ENCODE measurements at regions of chr2 and their contacts with region 1.

Region 1: DNA sequence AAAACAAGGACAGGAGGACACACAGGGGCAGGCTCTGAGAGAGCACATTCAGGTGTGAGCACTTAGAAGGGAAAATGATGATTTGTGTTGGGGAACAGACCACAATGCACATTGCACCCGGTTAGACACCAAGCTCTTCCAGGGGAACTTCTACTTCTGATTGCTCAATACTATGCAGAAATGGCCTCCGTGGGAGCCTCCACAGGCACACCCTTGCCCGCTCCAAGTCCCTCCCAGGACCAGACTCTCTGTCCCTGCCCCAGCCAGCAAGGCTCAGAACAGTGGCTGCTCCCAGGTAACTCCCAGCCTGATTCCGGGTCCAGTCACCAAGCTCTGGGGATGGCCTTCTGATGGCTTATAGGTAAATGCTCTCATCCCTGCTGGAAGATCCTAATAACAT is 56.1 kb downstream of the BCL2L11 start:
- DNase-seq: no peak
- ATAC-seq: no peak; the same call in 1 of the 2 replicates
- H3K4me3 ChIP-seq: no peak overlapping the region
- H3K27ac ChIP-seq: no peak overlapping the region
- H3K4me1 ChIP-seq: peaks cover 9 to 19% of the 10 kb centered on the region in 2 experiments; a peak in 3 of 4 replicates
- H3K27me3 ChIP-seq: no peaks in the 10 kb centered on the region
- CTCF ChIP-seq: no peak
- POLR2A ChIP-seq: no peak
- RAD21 ChIP-seq: no peak

Region 2: DNA sequence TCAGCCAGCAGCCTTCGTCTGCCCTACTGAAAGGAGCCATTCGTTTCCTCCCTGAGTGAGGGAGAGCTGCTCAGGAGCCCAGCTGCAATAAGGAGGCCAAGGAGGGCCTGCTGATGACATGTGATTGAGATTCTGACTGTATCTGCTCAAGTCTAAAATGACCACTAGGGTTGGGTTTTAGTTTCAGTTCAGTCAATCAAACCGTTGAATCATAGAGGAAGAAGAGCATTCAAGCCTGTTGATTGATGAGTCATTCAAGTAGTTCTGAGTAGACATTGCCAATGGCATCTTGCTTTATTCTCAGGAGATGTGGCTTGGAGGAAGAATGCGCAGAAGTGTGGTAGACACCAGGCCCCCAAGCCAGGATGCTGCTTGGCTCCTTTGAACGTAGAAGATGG is 76.1 kb before region 1 on chr2:
- CTCF ChIA-PET with region 1: no interaction called
- POLR2A ChIA-PET with region 1: no interaction called
- RAD21 ChIA-PET with region 1: no interaction called
- intact Hi-C with region 1: no loop called
- DNase-seq: no peak
- ATAC-seq: peak; percentile 82
- H3K4me3 ChIP-seq: no peak overlapping the region
- H3K27ac ChIP-seq: no peak overlapping the region
- H3K4me1 ChIP-seq: peaks cover 4 to 14% of the 10 kb centered on the region in 2 experiments; a peak in 3 of 4 replicates
- H3K27me3 ChIP-seq: no peaks in the 10 kb centered on the region
- CTCF ChIP-seq: peak in 2 of 3 experiments; percentile 13 to 34; a peak in 2 of 6 replicates
- POLR2A ChIP-seq: no peak
- RAD21 ChIP-seq: no peak

Region 3: DNA sequence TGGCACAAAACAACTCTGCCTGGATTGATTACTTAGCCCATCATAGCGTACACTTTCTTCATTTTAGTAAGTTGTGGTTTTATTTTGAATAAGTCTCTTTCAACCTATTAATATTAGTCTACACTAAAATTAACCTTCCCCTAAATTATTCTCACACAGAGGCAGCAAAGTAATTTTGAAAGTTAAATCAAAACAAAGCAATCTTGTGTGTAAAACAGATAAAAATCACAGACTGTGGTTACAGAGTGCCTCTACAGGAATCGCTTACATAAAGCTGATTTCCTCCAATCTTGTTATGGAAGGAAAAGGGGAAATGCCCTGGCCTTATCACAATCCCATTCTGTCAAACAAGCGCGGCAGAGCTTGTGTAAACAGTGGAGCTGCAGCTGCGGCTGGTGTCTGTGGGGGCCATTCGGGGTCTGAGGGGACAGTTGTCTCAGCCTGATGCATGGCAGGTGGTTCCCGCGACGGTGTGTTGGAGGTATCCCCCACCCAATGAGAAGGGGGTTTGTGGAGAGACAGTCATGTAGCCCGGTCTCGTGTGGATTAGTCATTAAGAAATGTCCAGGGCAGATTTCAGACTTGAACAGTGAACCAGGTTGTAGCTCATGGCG is 14.0 kb before region 1 on chr2:
- CTCF ChIA-PET with region 1: no interaction called
- POLR2A ChIA-PET with region 1: no interaction called
- RAD21 ChIA-PET with region 1: no interaction called
- intact Hi-C with region 1: no loop called
- DNase-seq: no peak
- ATAC-seq: no peak
- H3K4me3 ChIP-seq: no peak overlapping the region
- H3K27ac ChIP-seq: no peak overlapping the region
- H3K4me1 ChIP-seq: peaks cover 9 to 20% of the 10 kb centered on the region in 2 experiments
- H3K27me3 ChIP-seq: no peaks in the 10 kb centered on the region
- CTCF ChIP-seq: no peak
- POLR2A ChIP-seq: no peak
- RAD21 ChIP-seq: no peak

Region 4: DNA sequence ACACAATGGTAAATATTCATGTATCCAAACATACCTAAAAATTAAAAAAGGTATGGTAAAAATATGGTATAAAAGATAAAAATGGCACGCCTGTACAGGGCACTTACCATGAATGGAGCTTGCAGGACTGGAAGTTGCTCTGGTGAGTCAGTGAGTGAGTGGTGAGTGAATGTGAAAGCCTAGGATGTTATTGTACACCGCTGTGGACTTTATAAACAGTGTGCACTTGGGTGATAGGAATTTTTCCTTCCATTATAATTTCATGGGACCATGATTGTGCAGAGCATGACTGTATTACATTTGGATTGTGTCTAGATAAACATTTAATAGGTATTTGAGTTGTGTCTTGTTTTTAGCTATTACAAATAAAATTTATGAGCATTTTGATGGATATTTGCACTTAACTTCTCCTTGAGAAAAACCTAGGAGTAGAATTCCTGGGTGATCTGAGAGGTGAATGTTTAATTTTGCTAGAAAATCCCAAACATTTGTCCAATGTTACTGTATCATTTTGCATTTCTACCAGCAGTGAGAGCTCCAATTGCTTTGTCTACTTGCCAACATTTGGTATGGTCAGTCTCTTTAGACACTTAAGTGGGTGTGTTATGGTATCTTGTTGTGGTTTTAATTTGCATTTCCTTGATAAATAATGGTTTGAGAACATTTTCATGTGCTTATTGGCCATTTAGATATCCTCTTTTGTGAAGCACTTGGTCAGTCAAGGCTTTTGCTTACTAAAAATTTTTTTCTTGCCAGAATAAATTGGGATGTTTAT is 25.6 kb after region 1 on chr2:
- CTCF ChIA-PET with region 1: no interaction called
- POLR2A ChIA-PET with region 1: no interaction called
- RAD21 ChIA-PET with region 1: no interaction called
- intact Hi-C with region 1: loop called (anchors 1 kb)
- DNase-seq: no peak
- ATAC-seq: no peak
- H3K4me3 ChIP-seq: no peak overlapping the region
- H3K27ac ChIP-seq: no peak overlapping the region
- H3K4me1 ChIP-seq: no peaks in the 10 kb centered on the region
- H3K27me3 ChIP-seq: no peaks in the 10 kb centered on the region
- CTCF ChIP-seq: no peak
- POLR2A ChIP-seq: no peak
- RAD21 ChIP-seq: no peak

Region 5: GRCh38 chr2:111946294-111947114 is 769.6 kb after region 1 on chr2:
- CTCF ChIA-PET with region 1: no interaction called
- POLR2A ChIA-PET with region 1: no interaction called
- RAD21 ChIA-PET with region 1: no interaction called
- intact Hi-C with region 1: no loop called
- DNase-seq: peak; percentile 94
- ATAC-seq: peak; percentile 91
- H3K4me3 ChIP-seq: peak overlapping the region in 1 of 2 experiments; percentile 44
- H3K27ac ChIP-seq: peak overlapping the region; percentile 59
- H3K4me1 ChIP-seq: peaks cover 24 to 26% of the 10 kb centered on the region in 2 experiments
- H3K27me3 ChIP-seq: no peaks in the 10 kb centered on the region
- CTCF ChIP-seq: no peak
- POLR2A ChIP-seq: no peak
- RAD21 ChIP-seq: peak; percentile 49

Measured in HCT116 (cell line).